ENCODE measurements at regions of chr10 and their contacts with region 1.

Region 1: GRCh38 chr10:99008054-99008453 is 227.6 kb downstream of the HPSE2 start:
- DNase-seq: no peak
- H3K4me3 ChIP-seq: no peak overlapping the region
- H3K27ac ChIP-seq: no peak overlapping the region
- H3K4me1 ChIP-seq: no peaks in the 10 kb centered on the region
- H3K27me3 ChIP-seq: no peaks in the 10 kb centered on the region
- CTCF ChIP-seq: no peak
- EP300 ChIP-seq: no peak
- POLR2A ChIP-seq: no peak

Region 2: GRCh38 chr10:98815039-98815885 is 192.8 kb before region 1 on chr10:
- in situ Hi-C with region 1: loop called in 1 of 4 experiments (anchors 25 kb)
- intact Hi-C with region 1: no loop called
- DNase-seq: no peak
- H3K4me3 ChIP-seq: no peak overlapping the region
- H3K27ac ChIP-seq: no peak overlapping the region
- H3K4me1 ChIP-seq: no peaks in the 10 kb centered on the region
- H3K27me3 ChIP-seq: no peaks in the 10 kb centered on the region
- CTCF ChIP-seq: no peak
- EP300 ChIP-seq: no peak
- POLR2A ChIP-seq: no peak

Region 3: GRCh38 chr10:99276848-99277486 is 268.9 kb after region 1 on chr10:
- in situ Hi-C with region 1: no loop called
- intact Hi-C with region 1: no loop called
- DNase-seq: no peak
- H3K4me3 ChIP-seq: no peak overlapping the region
- H3K27ac ChIP-seq: no peak overlapping the region
- H3K4me1 ChIP-seq: no peaks in the 10 kb centered on the region
- H3K27me3 ChIP-seq: peaks cover 3% of the 10 kb centered on the region
- CTCF ChIP-seq: peak in 2 of 5 experiments; percentile 6 to 14
- EP300 ChIP-seq: no peak
- POLR2A ChIP-seq: no peak